ENCODE measurements at regions of chr7 and their contacts with region 1.

Region 1: DNA sequence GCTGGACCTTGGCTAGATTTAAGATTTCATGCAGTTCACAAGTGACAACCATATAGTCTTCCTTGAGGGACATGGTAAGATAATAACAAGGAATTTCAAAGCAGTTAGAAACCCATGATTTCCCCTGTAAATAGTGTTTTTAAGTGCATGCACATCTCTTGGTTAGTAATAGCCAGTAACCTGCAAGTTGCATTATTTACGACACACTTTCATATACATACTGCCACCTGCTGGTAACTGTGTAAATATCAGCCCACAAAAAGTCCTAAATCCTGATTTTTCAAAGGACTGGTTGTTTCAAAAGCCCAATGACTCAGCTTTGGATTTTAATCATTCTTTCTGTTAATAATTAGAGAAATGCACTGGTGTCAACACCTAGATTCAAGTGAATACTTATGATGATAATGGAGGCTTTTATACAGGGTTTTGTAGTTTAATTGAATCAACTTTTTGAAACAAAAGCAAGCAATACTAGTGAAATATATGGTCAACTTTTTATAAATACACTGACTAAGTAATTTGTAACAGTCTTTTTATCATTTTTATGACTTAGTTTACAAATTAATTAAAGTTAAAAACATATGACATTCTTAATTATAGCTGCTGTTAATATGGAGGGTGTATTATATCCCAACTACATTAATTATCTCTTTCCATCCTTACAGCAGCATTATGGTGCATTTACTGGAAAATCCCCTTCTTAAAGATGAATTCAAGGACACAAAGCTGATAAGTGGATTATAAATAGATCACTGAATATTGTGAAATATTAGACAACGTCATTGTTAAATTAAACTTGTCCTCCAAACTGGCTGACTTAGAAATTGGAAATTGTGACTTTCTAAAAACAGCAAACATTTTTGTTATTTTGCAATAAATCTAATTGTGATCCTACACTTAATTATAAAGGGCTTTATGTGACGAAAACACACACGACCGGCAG is 367.7 kb upstream of the SEMA3D start:
- DNase-seq: peak in 3 of 5 donors; percentile 31 to 85 (median 78)
- H3K4me3 ChIP-seq: no peak overlapping the region
- H3K27ac ChIP-seq: no peak overlapping the region
- H3K4me1 ChIP-seq: no peaks in the 10 kb centered on the region
- H3K27me3 ChIP-seq: no peaks in the 10 kb centered on the region
- CTCF ChIP-seq: peak; percentile 69

Region 2: GRCh38 chr7:85041605-85042216 is 512.8 kb before region 1 on chr7:
- intact Hi-C with region 1: loop called (anchors 10 kb)
- DNase-seq: peak in 4 of 5 donors; percentile 73 to 90 (median 84)
- H3K4me3 ChIP-seq: peak overlapping the region in 1 of 3 donors; percentile 14
- H3K27ac ChIP-seq: no peak overlapping the region
- H3K4me1 ChIP-seq: peaks cover 0 to 2% (median 0%) of the 10 kb centered on the region in 3 donors
- H3K27me3 ChIP-seq: no peaks in the 10 kb centered on the region
- CTCF ChIP-seq: peak; percentile 75